Dendritic cell treated with granulocyte-macrophage colony-stimulating factor and Interleukin-4, amounts not matched to agents 40 ng/mL and 50 ng/mL, for 4 days (primary cell): ENCODE measurements at regions of chr10 and their contacts with region 1.

Region 1: GRCh38 chr10:120942806-120943413 is 91.7 kb downstream of the WDR11 start:
- H3K4me3 Mint-ChIP-seq: peak overlapping the region; percentile 27
- H3K27ac Mint-ChIP-seq: no peak overlapping the region
- H3K4me1 Mint-ChIP-seq: no peaks in the 10 kb centered on the region
- H3K27me3 Mint-ChIP-seq: peaks cover 39% of the 10 kb centered on the region

Region 2: DNA sequence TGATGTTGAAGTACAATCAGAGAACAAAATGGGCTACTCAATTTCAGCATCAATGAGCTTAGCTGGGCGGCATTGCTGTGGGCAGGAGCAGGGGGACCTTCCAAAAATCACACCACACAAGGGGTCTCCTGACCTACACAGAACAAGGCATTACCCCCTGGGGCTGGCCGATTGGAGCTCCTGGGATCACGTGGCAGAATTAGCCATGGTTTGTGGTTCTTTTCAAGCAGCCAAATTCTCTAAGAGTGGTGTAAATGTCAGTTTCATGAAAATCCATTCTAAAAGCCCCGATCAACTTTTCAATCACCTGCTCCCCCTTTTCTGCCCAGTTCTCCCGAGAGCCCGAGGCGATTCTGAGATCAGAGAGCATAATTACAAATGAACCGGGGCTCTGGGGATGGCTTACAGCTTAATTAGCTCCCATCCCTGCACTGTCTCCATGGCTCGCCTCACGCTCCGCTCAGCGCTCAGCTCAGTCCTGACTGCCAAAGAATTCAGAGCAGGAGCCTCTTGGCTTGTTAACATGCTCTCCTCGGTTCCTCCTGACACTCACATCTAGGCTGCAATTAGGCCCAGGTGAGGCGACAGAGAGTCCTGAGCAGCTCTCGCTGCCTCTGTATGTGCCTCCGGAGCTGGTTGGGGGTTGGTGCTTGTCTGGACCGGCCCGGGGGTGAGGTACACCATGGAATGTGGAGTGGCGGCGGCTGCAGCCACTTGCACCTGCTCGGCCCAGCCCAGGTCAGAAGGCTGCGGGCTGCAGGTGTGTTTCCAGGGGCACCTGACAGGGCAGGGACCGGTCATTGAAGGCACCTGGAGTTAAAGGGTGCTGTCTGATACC is 20.1 kb after region 1 on chr10:
- intact Hi-C with region 1: no loop called
- H3K4me3 Mint-ChIP-seq: no peak overlapping the region
- H3K27ac Mint-ChIP-seq: no peak overlapping the region
- H3K4me1 Mint-ChIP-seq: no peaks in the 10 kb centered on the region
- H3K27me3 Mint-ChIP-seq: peaks cover 84% of the 10 kb centered on the region

Region 3: GRCh38 chr10:121608469-121609190 is 665.7 kb after region 1 on chr10:
- intact Hi-C with region 1: loop called (anchors 2 kb)
- H3K4me3 Mint-ChIP-seq: no peak overlapping the region
- H3K27ac Mint-ChIP-seq: no peak overlapping the region
- H3K4me1 Mint-ChIP-seq: no peaks in the 10 kb centered on the region
- H3K27me3 Mint-ChIP-seq: peaks cover 47% of the 10 kb centered on the region

Region 4: GRCh38 chr10:121900443-121901174 is 957.7 kb after region 1 on chr10:
- intact Hi-C with region 1: loop called (anchors 5 kb)
- H3K4me3 Mint-ChIP-seq: no peak overlapping the region
- H3K27ac Mint-ChIP-seq: no peak overlapping the region
- H3K4me1 Mint-ChIP-seq: no peaks in the 10 kb centered on the region
- H3K27me3 Mint-ChIP-seq: no peaks in the 10 kb centered on the region